Activated CD4-positive, alpha-beta memory T cell treated with anti-CD3 and anti-CD28 coated beads for 36 hours (primary cell): ENCODE measurements at regions of chr6 and their contacts with region 1.

Region 1: DNA sequence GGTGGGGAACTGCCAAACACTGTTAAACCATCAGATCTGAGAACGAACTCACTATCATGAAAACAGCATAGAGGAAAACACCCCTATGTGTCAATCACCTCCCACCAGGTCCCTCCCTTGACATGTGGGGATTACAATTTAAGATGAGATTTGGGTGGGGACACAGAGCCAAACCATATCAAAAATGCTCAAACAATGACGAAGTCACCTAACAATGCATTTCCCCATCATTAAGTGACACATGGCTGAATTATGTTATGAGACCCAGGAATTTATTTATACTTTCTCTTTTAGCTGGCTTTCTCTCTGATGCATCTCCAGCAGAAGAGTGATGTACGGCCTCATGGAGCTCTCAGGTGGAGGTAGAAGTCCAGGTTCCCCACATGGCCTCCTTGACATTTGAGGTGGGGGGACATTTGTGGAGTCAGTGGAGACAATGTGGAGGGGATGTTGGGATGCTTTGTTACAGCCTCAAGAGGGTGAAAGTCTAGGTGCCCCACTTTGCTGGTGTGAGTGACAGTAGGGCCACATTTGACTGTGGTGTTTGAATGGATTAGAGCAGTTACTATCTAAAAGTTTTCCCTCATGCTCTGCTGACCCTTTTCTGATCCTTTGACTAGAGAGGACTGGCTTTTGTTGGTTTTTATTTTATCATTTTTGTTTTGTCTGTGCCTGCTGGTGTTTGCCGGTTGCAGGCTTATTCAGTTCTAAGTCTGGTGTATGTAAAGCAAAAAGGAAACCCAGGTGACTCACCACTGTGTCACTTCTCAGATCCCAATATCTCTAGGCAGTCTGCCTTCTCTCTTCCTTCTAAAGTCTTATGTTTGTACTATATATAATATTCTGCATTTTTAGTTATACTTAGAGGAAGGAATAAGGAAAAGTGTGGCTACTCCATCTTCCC is 18.5 kb upstream of the DCBLD1 start:
- DNase-seq: peak; percentile 33
- H3K4me3 Mint-ChIP-seq: peak overlapping the region; percentile 16
- H3K27ac Mint-ChIP-seq: peak overlapping the region; percentile 57
- H3K4me1 Mint-ChIP-seq: peaks cover 15% of the 10 kb centered on the region
- H3K27me3 Mint-ChIP-seq: peaks cover 13% of the 10 kb centered on the region

Region 2: DNA sequence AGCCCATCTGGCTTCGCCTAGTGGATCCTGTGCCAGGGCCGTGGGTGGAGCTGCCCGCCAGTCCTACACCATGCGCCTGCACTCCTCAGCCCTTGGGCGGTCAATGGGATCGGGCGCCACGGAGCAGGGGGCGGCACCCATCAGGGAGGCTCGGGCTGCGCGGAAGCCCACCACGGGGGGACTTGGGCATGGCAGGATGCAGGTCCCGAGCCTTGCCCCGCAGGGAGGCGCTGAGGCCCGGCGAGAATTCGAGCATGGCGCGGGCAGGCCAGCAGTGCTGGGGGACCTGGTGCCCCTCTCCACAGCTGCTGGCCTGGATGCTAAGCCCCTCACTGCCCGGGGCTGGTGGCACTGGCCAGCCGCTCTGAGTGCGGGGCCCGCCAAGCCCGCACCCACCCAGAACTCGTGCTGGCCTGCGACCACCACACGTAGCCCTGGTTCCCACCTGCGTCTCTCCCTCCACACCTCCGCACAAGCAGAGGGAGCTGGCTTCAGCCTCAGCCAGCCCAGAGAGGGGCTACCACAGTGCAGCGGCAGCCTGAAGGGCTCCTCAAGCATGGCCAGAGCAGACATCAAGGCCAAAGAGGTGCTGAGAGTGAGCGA is 90.7 kb before region 1 on chr6:
- CTCF ChIA-PET with region 1: no interaction called
- POLR2A ChIA-PET with region 1: no interaction called
- intact Hi-C with region 1: no loop called
- DNase-seq: no peak
- H3K4me3 Mint-ChIP-seq: no peak overlapping the region
- H3K27ac Mint-ChIP-seq: no peak overlapping the region
- H3K4me1 Mint-ChIP-seq: no peaks in the 10 kb centered on the region
- H3K27me3 Mint-ChIP-seq: peaks cover 7% of the 10 kb centered on the region

Region 3: DNA sequence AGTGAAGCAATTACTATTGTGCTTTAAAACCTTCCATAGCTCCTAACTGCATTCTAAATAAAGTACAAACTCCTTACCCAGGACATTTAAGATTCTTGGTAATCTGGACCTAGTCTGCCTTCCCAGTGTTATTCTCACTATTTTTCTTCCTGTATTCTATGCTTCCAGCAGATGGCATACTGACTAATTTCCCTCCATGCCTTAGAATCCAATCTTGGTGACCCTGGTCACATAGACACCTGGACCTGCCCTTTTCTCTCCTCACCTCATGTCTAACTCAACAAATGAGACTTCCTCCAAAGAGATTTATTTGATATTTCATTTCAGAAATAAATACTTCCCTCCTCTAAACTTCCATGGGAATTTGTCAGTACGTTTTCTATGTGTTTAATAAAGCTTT is 64.1 kb before region 1 on chr6:
- CTCF ChIA-PET with region 1: no interaction called
- POLR2A ChIA-PET with region 1: no interaction called
- intact Hi-C with region 1: no loop called
- DNase-seq: no peak
- H3K4me3 Mint-ChIP-seq: no peak overlapping the region
- H3K27ac Mint-ChIP-seq: no peak overlapping the region
- H3K4me1 Mint-ChIP-seq: no peaks in the 10 kb centered on the region
- H3K27me3 Mint-ChIP-seq: peaks cover 3% of the 10 kb centered on the region

Region 4: GRCh38 chr6:117482240-117483003 is 18.4 kb after region 1 on chr6 and contains the start of gene DCBLD1:
- CTCF ChIA-PET with region 1: no interaction called
- POLR2A ChIA-PET with region 1: no interaction called
- intact Hi-C with region 1: loop called (anchors 1 kb)
- DNase-seq: peak; percentile 74
- H3K4me3 Mint-ChIP-seq: peak within 1 kb of the TSS; percentile 82
- H3K27ac Mint-ChIP-seq: no peak within 1 kb of the TSS
- H3K4me1 Mint-ChIP-seq: peaks cover 12% of the 10 kb centered on the region
- H3K27me3 Mint-ChIP-seq: peaks cover 23% of the 10 kb centered on the region
- total RNA-seq, gene DCBLD1: 4.4 to 4.5 TPM

Region 5: DNA sequence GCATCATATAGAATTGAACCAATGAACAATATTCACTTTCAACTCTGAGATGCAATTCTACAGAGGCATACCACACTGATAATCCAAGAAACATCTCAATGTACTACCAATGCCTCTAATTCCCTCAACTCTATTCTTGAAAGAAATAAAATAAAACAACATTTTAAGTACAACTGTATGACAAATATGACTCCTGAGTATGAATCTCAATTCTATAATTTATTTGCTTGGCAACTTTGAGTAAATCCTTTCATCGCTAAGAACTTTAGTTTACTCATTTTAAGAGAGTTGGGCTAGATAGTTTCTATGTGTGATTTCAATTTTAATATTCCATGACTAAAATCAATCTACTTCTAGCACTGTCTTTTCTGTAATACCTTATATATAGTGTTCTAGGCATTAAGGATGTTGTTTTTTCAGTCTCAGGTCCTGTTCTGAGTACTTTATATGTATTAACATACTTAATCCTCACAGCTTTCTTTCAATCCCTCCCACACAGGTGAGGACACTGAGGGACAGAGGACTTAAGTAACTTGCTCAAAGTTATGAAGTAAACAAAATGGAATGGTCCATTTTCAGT is 104.9 kb after region 1 on chr6:
- CTCF ChIA-PET with region 1: interaction called, 4 read pairs
- POLR2A ChIA-PET with region 1: no interaction called
- intact Hi-C with region 1: loop called (anchors 1 kb)
- DNase-seq: no peak
- H3K4me3 Mint-ChIP-seq: no peak overlapping the region
- H3K27ac Mint-ChIP-seq: no peak overlapping the region
- H3K4me1 Mint-ChIP-seq: peaks cover 17% of the 10 kb centered on the region
- H3K27me3 Mint-ChIP-seq: no peaks in the 10 kb centered on the region